Activated T-helper 1 cell treated with anti-CD3 and anti-CD28 coated beads, Interleukin-12 subunit alpha, Interleukin-12 subunit beta, Interleukin-2, Interleukin-4 antibody, amounts not matched to agents 30 ng/mL and 10 ng/mL and 1 ng/mL, durations not matched to agents 14 hours and 24 hours and 36 hours (primary cell): ENCODE measurements at regions of chr13 and their contacts with region 1.

Region 1: GRCh38 chr13:46553886-46554858 is 1.2 kb downstream of the LRCH1 start:
- DNase-seq: peak; percentile 66
- H3K4me3 Mint-ChIP-seq: peak overlapping the region; percentile 95
- H3K27ac Mint-ChIP-seq: peak overlapping the region; percentile 92
- H3K4me1 Mint-ChIP-seq: peaks cover 53% of the 10 kb centered on the region
- H3K27me3 Mint-ChIP-seq: peaks cover 6% of the 10 kb centered on the region

Region 2: DNA sequence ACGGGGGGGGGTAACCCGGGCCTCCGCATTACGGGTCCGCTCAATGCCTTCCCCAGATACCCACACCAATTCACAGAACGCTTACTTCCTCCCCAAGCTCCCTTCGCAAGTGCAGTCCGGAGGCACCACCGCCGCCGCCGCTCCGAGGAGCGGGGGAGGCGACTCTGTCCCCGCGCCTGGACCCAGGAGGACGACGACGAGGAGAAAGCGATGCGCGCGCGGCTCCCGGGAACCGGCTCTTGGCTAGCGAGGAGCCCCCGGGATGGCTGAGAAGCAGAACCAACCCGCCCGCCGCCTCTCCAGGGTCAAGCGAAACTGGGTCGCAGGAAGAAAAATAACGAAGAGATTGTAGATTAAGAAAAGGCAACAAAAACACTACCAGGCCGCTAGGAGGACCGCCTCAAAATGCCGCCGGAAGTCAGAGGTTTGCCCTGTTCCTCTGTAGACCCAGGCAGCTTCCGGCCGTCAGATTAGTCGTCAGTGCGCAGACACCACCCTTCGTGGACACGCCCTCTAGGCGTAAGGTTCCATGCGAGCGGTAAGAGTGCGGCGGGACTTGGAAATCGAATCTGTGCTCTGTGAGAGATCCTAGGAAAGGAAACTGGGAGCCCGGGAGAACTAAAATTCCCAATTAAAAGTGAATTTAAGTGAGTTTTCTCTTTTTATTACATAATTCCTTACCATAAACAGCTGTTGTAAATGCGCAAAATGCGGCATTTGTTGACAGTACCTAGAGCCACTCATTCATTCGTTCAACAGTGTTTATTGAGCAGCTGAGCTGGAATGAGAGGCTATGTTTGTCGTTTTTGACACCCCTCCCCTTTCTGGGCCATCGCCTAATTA is 501.6 kb before region 1 on chr13 and contains the start of gene ZC3H13:
- intact Hi-C with region 1: loop called (anchors 10 kb)
- DNase-seq: peak; percentile 89
- H3K4me3 Mint-ChIP-seq: peak within 1 kb of the TSS; percentile 93
- H3K27ac Mint-ChIP-seq: peak within 1 kb of the TSS; percentile 94
- H3K4me1 Mint-ChIP-seq: peaks cover 40% of the 10 kb centered on the region
- H3K27me3 Mint-ChIP-seq: peaks cover 15% of the 10 kb centered on the region
- total RNA-seq, gene ZC3H13: 52.0 and 59.4 TPM in 2 replicates

Region 3: DNA sequence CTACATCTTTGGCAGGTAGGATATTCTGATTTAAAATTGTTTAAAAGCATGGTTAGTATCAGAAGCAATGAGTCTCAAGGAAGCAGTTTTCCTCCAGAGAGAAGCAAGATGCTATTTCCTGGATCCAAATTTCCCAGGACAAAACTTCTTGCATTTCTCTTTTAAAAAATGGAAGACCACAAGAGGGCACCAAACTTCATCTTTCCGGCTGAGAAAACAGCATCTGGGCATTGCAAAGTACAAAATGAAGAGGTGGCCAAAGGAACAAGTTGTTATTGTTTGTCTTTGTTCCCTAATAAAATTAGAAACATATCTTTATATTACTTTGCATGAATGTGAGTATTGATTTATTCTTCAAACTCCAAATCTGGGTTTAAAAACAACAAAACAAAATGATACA is 61.2 kb before region 1 on chr13:
- intact Hi-C with region 1: loop called (anchors 2 kb)
- DNase-seq: no peak
- H3K4me3 Mint-ChIP-seq: no peak overlapping the region
- H3K27ac Mint-ChIP-seq: no peak overlapping the region
- H3K4me1 Mint-ChIP-seq: peaks cover 9% of the 10 kb centered on the region
- H3K27me3 Mint-ChIP-seq: peaks cover 5% of the 10 kb centered on the region

Region 4: DNA sequence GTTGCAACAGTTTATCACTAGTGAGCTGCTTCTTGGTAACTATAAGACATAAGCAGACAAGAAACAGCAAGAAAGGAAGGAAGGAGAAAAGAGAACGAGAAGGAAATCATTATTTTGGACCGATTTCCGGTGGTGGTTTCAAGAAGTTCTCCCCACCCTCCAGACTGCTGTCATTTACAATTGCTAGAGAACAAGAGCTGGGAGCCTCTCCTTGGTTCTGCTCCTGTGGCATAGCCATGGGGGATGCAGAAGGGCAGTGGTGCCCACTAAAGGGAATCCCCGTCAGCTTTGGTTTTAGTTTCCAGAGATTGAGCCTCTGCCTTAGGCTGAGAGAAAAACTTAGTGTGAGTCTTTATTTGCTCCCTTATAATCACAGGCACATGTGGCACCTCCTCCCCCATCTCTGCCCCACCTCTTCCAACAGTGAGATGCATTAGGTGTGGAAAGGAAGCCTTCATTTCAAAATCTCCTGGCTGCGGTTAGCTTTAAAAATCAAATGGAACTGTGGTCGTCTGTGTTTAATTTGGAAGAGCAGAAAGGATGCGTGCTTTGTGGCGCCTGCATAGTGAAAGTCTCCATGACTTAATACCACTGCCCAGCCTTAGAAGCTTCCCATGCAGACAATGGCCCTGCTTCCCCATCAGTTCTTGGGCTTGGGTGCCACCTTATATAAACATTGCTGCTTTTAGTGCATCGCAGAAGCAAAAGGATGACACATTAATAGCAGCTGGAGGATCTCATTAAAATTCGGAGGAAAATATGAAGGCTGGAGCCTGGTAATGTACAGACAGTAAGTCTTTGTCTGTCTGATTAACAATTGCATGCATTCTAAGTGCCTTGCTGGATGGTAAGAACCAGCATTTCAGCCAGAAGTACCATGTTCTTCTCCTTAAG is 23.8 kb after region 1 on chr13:
- intact Hi-C with region 1: loop called (anchors 1 kb)
- DNase-seq: no peak
- H3K4me3 Mint-ChIP-seq: peak overlapping the region; percentile 6
- H3K27ac Mint-ChIP-seq: peak overlapping the region; percentile 68
- H3K4me1 Mint-ChIP-seq: peaks cover 55% of the 10 kb centered on the region
- H3K27me3 Mint-ChIP-seq: peaks cover 2% of the 10 kb centered on the region

Region 5: GRCh38 chr13:46655377-46656180 is 101.4 kb after region 1 on chr13:
- intact Hi-C with region 1: loop called (anchors 2 kb)
- DNase-seq: no peak
- H3K4me3 Mint-ChIP-seq: peak overlapping the region; percentile 35
- H3K27ac Mint-ChIP-seq: peak overlapping the region; percentile 38
- H3K4me1 Mint-ChIP-seq: peaks cover 35% of the 10 kb centered on the region
- H3K27me3 Mint-ChIP-seq: no peaks in the 10 kb centered on the region

Region 6: GRCh38 chr13:46679369-46680120 is 125.4 kb after region 1 on chr13:
- intact Hi-C with region 1: loop called (anchors 1 kb)
- DNase-seq: peak; percentile 38
- H3K4me3 Mint-ChIP-seq: no peak overlapping the region
- H3K27ac Mint-ChIP-seq: no peak overlapping the region
- H3K4me1 Mint-ChIP-seq: peaks cover 20% of the 10 kb centered on the region
- H3K27me3 Mint-ChIP-seq: no peaks in the 10 kb centered on the region

Region 7: DNA sequence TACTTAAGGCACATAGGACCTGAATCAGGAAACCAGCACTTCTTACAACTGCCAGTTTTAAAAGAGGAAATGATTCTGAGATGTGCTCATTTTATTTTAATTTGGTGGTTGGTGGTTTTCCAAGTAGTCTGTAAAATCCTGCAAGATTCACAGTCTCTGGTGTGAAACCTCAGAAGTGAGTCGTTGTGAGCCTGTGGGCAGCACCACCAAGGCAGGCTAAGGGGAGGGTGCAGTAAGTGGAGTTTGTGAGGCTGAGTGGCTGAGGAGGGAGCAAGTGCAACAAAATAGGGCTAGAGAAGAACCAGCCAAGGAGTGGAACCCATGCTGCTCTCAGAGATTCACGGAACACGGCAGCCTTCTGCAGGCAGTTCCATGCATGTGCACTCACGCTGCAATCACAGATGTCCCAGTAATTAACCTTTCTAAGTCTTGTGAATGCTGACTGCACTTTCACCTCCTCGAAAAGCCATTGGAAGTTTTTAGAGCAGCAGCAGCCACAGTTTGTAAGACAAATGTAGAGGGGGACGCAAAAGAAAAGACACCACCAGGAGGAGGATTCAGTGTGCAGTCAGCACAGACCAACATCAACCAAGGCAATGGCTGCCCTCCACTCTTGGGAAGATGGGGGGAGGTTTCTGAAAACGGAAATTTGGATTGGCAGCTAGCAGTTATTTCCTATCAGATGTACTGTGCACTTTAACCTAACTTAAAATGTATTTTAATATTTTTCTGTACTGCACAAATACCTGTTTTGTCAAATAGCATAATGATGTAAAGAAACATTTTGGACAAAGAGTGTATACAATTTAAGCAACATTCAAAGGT is 197.9 kb after region 1 on chr13:
- intact Hi-C with region 1: loop called (anchors 1 kb)
- DNase-seq: peak; percentile 66
- H3K4me3 Mint-ChIP-seq: peak overlapping the region; percentile 5
- H3K27ac Mint-ChIP-seq: peak overlapping the region; percentile 69
- H3K4me1 Mint-ChIP-seq: peaks cover 47% of the 10 kb centered on the region
- H3K27me3 Mint-ChIP-seq: no peaks in the 10 kb centered on the region